ENCODE measurements at regions of chr2 and their contacts with region 1.

Region 1: DNA sequence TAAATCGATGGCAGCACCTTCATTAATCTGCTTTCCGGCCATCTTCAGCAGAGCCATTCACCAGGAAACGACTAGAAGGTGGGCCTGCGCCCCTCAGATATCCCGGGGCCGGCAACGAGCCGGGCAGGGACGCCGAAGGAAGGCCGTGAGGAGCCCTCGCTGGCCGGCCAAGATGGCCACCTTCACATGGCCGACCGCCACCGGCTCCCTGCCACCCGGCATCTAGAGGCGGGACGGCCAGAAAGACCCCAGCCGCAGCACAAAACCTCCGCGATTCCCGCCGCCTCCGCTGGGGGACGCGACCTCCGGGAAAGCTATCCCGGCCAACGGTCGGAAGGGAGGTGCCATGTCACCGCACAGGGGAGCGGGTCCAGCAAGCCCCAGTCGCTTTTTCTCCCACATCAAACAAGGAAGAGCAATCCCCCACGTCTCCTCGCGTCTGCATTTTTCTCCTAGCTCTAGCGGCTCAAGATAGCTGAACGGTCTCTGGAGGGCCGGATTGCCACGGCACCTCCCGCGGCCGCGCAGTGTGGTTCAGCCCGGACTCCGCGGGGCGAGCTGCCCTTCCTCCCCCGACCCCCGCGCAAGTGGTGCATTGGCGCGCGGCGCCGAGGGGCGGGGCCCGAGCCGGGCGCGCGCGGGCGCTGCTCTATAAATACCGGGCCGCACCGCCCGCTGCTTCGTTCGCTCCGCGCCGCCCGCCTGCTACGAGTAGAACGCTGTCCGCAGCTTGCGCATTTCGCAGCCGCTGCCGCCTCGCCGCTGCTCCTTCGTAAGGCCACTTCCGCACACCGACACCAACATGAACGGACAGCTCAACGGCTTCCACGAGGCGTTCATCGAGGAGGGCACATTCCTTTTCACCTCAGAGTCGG is at the start of gene MAT2A:
- DNase-seq: peak; percentile 89
- H3K4me3 Mint-ChIP-seq: peak within 1 kb of the TSS; percentile 94
- H3K27ac Mint-ChIP-seq: peak within 1 kb of the TSS; percentile 94
- H3K4me1 Mint-ChIP-seq: peaks cover 48% of the 10 kb centered on the region
- H3K27me3 Mint-ChIP-seq: no peaks in the 10 kb centered on the region
- total RNA-seq, gene MAT2A: 196 to 199 TPM

Region 2: GRCh38 chr2:85318222-85319074 is 220.3 kb before region 1 on chr2:
- CTCF ChIA-PET with region 1: no interaction called
- POLR2A ChIA-PET with region 1: interaction called, 27 read pairs
- DNase-seq: no peak
- H3K4me3 Mint-ChIP-seq: peak overlapping the region; percentile 2
- H3K27ac Mint-ChIP-seq: peak overlapping the region; percentile 52
- H3K4me1 Mint-ChIP-seq: peaks cover 56% of the 10 kb centered on the region
- H3K27me3 Mint-ChIP-seq: no peaks in the 10 kb centered on the region

Region 3: GRCh38 chr2:85390941-85391669 is 147.6 kb before region 1 on chr2:
- CTCF ChIA-PET with region 1: no interaction called
- POLR2A ChIA-PET with region 1: interaction called, 22 read pairs
- DNase-seq: peak; percentile 77
- H3K4me3 Mint-ChIP-seq: no peak overlapping the region
- H3K27ac Mint-ChIP-seq: no peak overlapping the region
- H3K4me1 Mint-ChIP-seq: peaks cover 10% of the 10 kb centered on the region
- H3K27me3 Mint-ChIP-seq: no peaks in the 10 kb centered on the region

Region 4: GRCh38 chr2:85430752-85431569 is 107.8 kb before region 1 on chr2:
- CTCF ChIA-PET with region 1: interaction called, 3 read pairs
- POLR2A ChIA-PET with region 1: interaction called, 44 read pairs
- DNase-seq: no peak
- H3K4me3 Mint-ChIP-seq: no peak overlapping the region
- H3K27ac Mint-ChIP-seq: no peak overlapping the region
- H3K4me1 Mint-ChIP-seq: no peaks in the 10 kb centered on the region
- H3K27me3 Mint-ChIP-seq: no peaks in the 10 kb centered on the region

Region 5: DNA sequence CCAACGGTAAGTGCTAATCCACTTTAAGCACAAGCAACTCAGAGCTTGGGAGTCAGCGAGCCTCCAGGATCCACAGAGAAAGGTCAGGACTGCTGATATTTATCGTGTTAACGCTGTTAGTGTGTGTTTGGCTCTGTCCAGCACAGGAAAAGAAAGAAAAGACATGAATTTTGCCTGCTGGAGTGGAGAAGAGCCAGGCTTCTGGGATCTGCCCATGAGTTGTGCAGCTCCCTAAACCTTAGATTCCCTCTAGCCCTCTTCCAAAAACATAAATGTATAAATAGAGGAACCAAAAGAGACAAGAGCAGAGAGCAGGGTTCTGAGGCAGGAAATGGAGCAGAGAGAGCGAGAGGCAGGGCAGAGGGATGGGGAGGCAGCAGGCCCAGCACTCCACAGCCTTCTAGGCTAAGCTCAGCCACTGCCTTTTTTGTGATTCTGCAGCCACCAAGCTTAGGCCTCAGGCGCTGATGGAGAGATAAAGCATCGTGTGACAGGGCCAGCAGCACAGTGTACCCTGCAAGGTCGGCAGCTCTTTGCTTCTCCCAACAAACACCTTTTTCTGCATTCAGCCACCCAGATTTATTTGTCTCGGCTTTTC is 14.3 kb before region 1 on chr2:
- CTCF ChIA-PET with region 1: no interaction called
- POLR2A ChIA-PET with region 1: interaction called, 14 read pairs
- DNase-seq: no peak
- H3K4me3 Mint-ChIP-seq: no peak overlapping the region
- H3K27ac Mint-ChIP-seq: no peak overlapping the region
- H3K4me1 Mint-ChIP-seq: no peaks in the 10 kb centered on the region
- H3K27me3 Mint-ChIP-seq: peaks cover 26% of the 10 kb centered on the region

Region 6: DNA sequence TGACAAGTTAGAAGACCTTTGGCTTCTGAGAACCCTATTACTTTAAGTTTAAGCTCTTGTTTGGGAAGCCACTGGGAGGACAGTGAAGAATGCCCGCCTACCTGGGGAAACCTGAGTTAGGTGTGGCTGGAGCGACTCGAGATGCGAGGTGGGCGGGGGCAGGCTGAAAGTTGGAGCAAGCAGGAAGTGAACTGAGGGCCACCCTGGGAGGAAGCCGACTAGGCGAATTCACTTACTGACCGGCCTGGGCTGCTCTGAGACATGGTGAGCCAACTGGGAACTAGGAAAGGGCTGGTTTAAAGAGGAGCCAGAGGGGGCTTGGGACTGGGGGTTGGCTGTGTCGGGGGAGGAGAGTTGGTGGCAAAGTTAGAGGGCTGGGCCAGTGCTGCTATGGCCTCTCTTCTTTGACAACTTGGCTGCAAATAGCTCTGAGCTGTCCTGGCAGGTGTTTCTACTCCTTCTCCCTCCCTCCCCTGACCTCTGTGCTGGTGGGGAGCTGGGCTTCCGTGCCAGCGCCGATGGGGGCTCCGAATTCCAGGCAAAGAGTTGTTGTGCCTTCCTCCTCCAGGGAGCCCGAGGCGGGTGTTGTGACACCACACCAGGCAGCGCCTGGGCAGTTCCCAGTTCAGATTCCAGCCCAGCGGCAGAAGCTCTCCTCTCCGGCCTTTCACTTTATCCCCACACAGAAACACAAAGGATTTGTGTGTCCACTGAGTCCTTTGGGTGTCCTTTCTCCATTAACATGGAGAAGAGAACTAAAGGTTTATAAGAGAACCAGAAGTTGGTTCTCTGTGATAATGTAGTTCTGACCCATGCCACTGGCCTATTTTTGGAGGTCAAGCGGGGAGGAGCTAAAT is 38.9 kb after region 1 on chr2 and contains the start of gene VAMP8:
- CTCF ChIA-PET with region 1: no interaction called
- POLR2A ChIA-PET with region 1: interaction called, 28 read pairs
- DNase-seq: peak; percentile 71
- H3K4me3 Mint-ChIP-seq: peak within 1 kb of the TSS; percentile 97
- H3K27ac Mint-ChIP-seq: peak within 1 kb of the TSS; percentile 68
- H3K4me1 Mint-ChIP-seq: peaks cover 37% of the 10 kb centered on the region
- H3K27me3 Mint-ChIP-seq: peaks cover 2% of the 10 kb centered on the region
- total RNA-seq, gene VAMP8: 132 to 133 TPM

Region 7: DNA sequence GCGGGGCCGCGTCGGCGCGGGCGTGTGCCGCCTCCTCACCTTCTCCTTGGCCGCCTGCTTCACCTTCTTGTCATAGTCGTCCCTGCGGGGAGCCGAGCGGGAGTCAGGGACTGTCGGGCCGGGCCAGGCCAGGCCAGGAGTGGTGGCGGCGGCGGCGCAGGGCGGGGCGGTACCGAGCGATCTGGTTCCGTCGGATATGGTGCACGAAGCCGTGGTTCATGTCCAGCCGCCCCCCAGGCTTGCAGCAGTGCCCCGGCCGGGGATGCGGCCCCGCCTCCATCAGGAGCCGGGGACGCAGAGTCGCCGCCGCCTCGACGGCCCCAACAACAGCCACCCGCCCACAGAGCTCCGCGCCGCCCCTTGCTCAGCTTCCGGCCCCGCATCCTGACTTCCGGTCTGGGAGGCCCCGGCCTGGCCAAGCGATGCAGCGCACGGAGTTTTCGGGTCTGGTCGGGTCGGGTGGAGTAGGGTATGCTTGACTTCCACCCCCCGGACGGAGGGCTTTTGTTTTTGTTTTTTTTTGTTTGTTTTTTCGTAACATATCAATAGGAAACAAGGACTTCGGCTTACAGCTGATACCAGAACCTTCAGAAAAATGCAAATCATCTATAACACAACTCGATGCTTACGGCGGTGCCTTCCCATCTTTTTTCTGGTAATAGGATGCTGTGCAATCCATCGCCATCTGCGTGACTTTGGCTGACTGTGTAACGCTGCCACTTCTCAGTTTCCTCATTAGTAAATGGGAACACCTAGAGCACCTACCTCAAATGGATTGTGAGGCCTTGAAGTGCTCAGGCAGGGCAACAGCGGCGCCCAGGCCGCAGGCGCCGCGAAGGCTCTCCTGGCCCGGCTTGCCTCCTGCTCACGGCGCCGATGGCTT is 73.2 kb after region 1 on chr2 and contains the start of gene C2orf68:
- CTCF ChIA-PET with region 1: no interaction called
- POLR2A ChIA-PET with region 1: interaction called, 15 read pairs
- DNase-seq: peak; percentile 90
- H3K4me3 Mint-ChIP-seq: peak within 1 kb of the TSS; percentile 94
- H3K27ac Mint-ChIP-seq: peak within 1 kb of the TSS; percentile 86
- H3K4me1 Mint-ChIP-seq: peaks cover 46% of the 10 kb centered on the region
- H3K27me3 Mint-ChIP-seq: no peaks in the 10 kb centered on the region
- total RNA-seq, gene C2orf68: 48.8 to 50.9 TPM